ENCODE measurements at regions of chr2 and their contacts with region 1.

Region 1: DNA sequence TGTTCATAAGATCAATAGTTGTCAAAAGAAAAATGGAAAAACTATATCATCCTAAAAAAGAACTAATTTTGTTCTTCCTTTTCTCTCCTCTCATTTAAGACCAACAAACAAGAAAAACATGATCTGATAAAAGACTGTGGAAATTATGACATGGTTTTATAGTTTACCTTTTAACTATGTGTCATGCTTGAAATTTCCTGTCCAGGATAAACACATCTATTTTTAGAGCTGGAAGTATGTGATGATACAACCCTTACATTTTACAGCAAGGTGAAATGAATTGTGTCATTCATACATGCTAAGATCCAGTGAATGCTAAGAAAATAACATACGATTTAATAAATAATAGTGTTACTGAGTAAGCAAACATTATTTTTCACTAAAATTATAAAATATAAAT is 89.9 kb downstream of the GULP1 start:
- DNase-seq: no peak
- ATAC-seq: no peak
- H3K4me3 ChIP-seq: no peak overlapping the region
- H3K27ac ChIP-seq: peak overlapping the region in 1 of 12 donors; percentile 2
- H3K4me1 ChIP-seq: peaks cover 0 to 14% (median 5%) of the 10 kb centered on the region in 12 donors
- H3K27me3 ChIP-seq: no peaks in the 10 kb centered on the region
- CTCF ChIP-seq: no peak
- POLR2A ChIP-seq: no peak

Region 2: GRCh38 chr2:188333751-188334524 is 47.7 kb before region 1 on chr2:
- intact Hi-C with region 1: loop called in 1 of 10 experiments (anchors 2 kb)
- DNase-seq: peak in 4 of 5 donors; percentile 23 to 60 (median 32)
- ATAC-seq: peak; percentile 82 to 91 (median 87)
- H3K4me3 ChIP-seq: peak overlapping the region in 6 of 12 donors; percentile 6 to 24 (median 19)
- H3K27ac ChIP-seq: peak overlapping the region in 11 of 12 donors; percentile 9 to 75 (median 56)
- H3K4me1 ChIP-seq: peaks cover 0 to 24% (median 9%) of the 10 kb centered on the region in 12 donors
- H3K27me3 ChIP-seq: no peaks in the 10 kb centered on the region
- CTCF ChIP-seq: no peak
- POLR2A ChIP-seq: no peak